ENCODE measurements at regions of chr10 and their contacts with region 1.

Region 1: DNA sequence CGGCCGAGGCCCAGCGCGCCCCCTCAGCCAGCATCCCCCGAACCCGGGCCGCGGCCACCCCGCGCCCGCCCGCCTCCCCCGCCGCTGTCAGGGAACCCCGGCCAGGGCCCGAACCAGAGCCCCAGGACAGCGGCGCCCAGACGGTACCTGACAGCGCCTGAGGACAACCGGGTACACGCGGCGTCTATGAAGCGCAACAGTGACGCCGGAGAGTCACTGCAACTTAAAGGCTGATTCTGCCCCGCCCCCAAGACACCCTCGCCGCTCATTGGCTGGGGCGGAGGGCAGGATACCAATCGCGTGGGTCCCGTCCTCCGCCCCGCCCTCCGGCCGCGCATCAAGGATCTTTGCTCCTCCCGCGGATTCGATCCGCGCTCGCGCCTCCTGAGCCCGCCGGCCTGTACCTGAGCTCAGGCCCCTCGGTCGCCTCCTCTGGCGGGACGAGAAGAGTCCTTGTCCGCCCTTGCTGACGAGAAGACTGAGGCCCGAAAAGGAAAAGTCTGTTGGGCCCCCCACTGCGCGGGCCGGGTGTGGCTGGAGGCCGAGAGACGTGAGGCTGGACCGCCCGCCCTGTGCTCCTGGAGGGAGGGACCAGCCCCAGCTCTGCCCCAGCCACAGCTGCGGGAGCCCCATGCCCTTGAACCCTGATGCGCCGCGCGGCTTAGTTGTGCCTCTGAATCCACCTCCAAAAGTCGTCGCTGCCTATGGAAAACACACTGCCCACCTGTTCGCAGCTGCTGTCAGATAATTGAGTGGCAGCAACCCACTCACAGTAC is at the start of gene OAT:
- DNase-seq: peak; percentile 93 to 100 (median 98)

Region 2: GRCh38 chr10:124211921-124212320 is 207.0 kb before region 1 on chr10:
- intact Hi-C with region 1: no loop called
- DNase-seq: no peak

Region 3: DNA sequence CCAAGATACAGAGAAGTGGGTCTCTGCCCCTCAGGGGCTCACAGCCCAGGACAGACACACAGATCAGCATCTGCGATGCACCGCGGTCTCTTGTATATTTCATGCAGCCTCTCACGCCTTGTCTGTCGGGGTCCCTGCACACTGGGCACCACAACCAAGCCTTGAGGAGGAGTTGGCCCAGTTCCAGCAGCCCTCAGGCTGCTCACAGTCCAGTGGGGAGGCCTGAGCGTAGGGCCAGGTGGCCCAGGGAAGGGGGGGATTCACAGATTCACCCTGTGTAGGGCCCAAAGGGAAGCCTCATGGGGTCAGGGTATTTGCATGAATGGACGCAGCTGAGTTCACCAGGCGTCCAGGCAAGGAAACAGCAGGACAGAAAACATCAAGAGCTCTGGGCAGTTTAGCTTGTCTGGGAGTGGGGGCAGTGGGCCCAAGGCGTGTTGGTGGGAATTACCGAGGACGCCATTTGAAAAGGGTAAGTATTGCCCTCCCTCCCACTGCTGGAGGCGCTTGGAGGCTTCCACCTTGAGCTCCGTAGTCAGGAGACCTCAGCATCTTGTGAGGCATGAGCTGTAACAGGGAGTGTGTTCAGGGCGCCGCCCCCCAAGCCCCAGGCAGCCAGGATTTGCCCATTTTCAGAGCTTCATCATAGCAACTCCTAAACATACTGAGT is 196.5 kb before region 1 on chr10:
- intact Hi-C with region 1: no loop called
- DNase-seq: peak in 1 of 10 donors; percentile 72

Region 4: DNA sequence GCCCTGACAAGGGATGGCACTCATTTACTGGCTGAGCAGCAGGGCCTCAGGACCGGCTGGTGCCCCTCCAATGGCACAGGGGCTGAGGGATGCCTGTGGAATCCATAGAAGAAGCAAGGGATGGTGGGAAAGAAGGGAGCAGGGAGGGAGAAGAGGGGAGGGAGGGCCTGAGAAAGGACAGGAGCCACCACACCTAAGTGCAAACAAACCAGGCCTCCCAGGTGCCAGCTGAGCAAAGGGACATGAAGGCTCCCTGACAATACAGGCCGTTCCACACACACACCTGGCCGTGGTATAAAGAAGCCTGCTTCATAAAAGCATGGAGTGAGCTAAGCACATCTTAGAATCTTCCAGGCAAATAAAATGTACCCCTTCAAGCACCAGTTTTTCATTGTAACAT is 54.3 kb before region 1 on chr10:
- intact Hi-C with region 1: no loop called
- DNase-seq: peak in 1 of 10 donors; percentile 56

Region 5: GRCh38 chr10:124461438-124462347 is 42.8 kb after region 1 on chr10 and contains the start of gene LHPP:
- intact Hi-C with region 1: loop called (anchors 5 kb)
- DNase-seq: peak; percentile 77 to 98 (median 87)

Region 6: DNA sequence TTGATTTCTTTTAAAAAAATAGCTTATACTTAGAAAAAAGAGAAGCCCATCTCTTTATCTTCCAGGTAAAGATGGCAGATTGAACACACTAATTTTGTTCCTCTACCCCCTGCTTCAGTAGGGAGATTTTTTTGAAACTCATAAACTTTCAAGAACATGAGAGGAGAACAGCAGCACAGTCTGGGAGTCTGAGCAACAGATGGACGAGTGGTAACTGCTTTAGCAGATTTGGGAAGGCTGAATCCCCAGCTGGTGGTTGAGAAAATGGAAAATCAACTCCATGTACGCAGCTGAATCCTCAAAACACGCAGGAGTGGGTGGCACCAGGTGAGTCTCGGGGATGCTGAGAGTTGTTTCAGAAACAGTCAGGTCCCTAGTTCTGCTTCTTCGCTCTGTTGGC is 856.0 kb after region 1 on chr10:
- intact Hi-C with region 1: no loop called
- DNase-seq: no peak